Brain microvascular endothelial cell (primary cell): ENCODE measurements at regions of chr3 and their contacts with region 1.

Region 1: DNA sequence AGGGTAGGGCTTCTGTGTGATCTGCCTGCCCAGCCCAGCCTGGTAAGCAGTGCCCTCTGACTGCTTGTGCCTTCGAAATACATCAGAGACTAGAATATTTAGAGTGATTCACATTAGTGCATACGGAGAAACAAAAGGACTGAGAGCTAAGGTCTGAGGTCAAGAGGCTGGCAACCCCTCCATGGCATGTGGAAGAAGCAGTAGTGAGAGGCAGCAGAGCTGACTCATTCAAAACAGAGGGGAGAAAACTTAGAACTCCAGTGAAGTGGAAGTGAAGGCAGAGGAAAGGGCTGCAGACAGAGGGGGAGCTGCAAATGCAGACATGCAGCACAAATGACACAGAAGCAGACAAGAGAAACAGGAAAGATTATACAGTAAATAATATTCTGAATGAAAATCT is 61.6 kb downstream of the ULK4 start:
- DNase-seq: peak; percentile 24
- H3K4me3 ChIP-seq: no peak overlapping the region
- H3K27ac ChIP-seq: no peak overlapping the region
- H3K27me3 ChIP-seq: no peaks in the 10 kb centered on the region
- CTCF ChIP-seq: no peak

Region 2: GRCh38 chr3:42080452-42080891 is 180.2 kb after region 1 on chr3:
- in situ Hi-C with region 1: loop called (anchors 25 kb)
- DNase-seq: no peak
- H3K4me3 ChIP-seq: no peak overlapping the region
- H3K27ac ChIP-seq: no peak overlapping the region
- H3K27me3 ChIP-seq: no peaks in the 10 kb centered on the region
- CTCF ChIP-seq: no peak